ENCODE measurements at regions of chr20 and their contacts with region 1.

Region 1: DNA sequence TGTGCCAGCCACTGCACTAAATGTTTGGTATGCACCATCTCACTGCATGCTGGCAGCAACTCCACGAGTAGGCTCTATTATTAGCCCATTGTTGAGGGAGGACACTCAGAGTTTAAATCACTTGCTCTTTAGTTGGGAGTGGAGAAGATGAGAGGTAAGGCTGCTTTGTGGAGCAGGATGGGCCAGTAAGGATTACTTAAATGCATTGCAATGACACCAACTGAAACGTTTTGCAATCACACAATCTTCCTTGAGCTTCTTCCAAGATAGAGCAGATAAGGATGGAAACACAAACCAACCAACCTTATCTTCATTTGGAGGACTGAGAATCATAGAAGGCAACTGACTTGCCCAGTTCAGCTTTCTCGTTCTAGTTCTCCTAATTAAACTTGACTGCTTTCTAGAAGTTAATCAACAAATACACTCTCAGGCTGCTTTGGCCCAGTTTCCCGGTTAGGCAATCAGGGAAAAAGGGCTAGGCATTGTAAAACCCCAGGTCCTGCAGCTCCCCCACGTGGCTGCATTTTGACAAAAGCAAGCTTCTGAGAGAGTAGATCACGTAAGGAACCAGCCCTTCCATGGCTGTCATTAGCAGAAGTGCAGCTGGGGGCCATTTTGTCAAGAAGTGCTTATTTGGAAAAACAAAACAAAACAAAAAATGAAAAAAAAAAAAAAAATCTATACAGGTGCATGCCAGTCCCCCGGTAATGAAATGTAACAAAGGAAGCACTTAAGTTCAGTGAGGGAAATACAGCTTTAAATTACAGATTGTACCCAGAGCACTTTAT is 130.6 kb downstream of the BCAS1 start:
- DNase-seq: peak; percentile 90
- H3K4me3 ChIP-seq: no peak overlapping the region
- H3K27ac ChIP-seq: peak overlapping the region; percentile 82
- H3K4me1 ChIP-seq: peaks cover 28% of the 10 kb centered on the region
- H3K27me3 ChIP-seq: no peaks in the 10 kb centered on the region
- CTCF ChIP-seq: peak; percentile 84 to 86

Region 2: DNA sequence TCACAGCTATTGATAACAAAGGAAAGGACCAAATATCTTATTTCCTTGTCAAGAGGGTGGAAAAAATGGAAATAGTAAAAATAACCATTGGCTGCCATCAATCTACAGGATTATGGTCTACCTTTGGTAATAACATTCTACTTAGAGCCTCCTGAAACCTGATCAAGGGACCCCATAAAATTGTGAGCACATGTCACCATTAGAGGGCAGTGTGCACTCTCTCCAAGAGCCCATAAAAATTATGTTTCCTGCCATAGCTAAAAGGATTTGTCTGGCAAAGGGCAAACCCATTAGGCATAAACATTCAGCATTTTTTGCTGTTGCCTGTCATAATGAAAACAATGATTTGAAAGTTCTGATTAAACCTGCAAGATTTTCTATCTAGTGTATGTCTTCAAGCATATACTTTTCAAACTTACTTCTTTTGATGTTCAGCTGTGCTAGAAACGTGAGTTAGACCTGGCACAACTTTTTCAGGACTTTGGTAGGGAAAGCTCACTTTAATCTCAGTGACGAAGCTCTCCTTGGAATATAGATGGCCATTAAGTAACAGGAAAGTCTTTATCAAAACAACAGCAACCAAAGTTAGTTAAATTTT is 1627.5 kb before region 1 on chr20:
- CTCF ChIA-PET with region 1: interaction called, 3 read pairs
- dilution Hi-C with region 1: no loop called
- in situ Hi-C with region 1: no loop called
- intact Hi-C with region 1: loop called (anchors 2 kb)
- DNase-seq: peak; percentile 32
- H3K4me3 ChIP-seq: no peak overlapping the region
- H3K27ac ChIP-seq: no peak overlapping the region
- H3K4me1 ChIP-seq: no peaks in the 10 kb centered on the region
- H3K27me3 ChIP-seq: no peaks in the 10 kb centered on the region
- CTCF ChIP-seq: peak; percentile 73 to 80

Region 3: GRCh38 chr20:52361650-52362049 is 1578.1 kb before region 1 on chr20:
- CTCF ChIA-PET with region 1: no interaction called
- dilution Hi-C with region 1: no loop called
- in situ Hi-C with region 1: no loop called
- intact Hi-C with region 1: no loop called
- DNase-seq: no peak
- H3K4me3 ChIP-seq: no peak overlapping the region
- H3K27ac ChIP-seq: no peak overlapping the region
- H3K4me1 ChIP-seq: no peaks in the 10 kb centered on the region
- H3K27me3 ChIP-seq: no peaks in the 10 kb centered on the region
- CTCF ChIP-seq: no peak

Region 4: DNA sequence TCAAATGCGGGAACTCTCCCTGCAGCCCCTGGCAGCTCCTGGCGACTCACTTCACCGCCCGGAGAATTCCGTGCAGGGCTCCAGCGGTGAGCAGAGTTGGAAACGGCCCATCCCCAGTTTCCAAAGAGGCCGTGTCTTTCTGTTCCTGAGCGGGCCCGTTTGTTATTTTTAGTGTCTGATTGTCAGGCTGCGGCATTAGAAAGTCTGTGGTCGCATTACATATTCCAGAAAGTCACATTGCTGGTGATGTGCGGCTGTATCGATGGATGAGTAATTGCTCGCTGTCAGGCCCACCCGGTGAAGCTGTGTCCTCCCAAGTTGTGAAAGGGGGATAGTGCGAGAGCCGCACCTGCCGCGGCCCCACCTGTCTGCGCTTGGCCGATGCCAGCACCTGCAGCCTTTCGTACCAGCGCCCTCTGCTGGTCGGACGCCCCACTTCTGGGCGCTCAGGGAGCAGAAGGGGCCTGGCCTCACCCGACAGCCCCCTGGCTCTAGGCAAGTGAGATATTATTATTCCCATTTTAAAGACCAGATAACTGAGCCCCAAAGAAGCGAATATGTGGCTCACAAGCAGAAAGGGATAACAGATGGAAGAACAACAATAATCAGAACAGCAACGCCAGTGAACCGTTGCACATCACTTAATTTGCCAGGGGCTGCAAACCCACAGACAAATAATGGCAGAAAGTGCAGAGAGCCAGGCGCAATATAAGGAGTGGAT is 722.8 kb before region 1 on chr20:
- CTCF ChIA-PET with region 1: no interaction called
- dilution Hi-C with region 1: no loop called
- in situ Hi-C with region 1: no loop called
- intact Hi-C with region 1: loop called (anchors 1 kb)
- DNase-seq: peak; percentile 37
- H3K4me3 ChIP-seq: peak overlapping the region in 1 of 3 experiments; percentile 11
- H3K27ac ChIP-seq: no peak overlapping the region
- H3K4me1 ChIP-seq: no peaks in the 10 kb centered on the region
- H3K27me3 ChIP-seq: no peaks in the 10 kb centered on the region
- CTCF ChIP-seq: peak; percentile 57 to 93

Region 5: DNA sequence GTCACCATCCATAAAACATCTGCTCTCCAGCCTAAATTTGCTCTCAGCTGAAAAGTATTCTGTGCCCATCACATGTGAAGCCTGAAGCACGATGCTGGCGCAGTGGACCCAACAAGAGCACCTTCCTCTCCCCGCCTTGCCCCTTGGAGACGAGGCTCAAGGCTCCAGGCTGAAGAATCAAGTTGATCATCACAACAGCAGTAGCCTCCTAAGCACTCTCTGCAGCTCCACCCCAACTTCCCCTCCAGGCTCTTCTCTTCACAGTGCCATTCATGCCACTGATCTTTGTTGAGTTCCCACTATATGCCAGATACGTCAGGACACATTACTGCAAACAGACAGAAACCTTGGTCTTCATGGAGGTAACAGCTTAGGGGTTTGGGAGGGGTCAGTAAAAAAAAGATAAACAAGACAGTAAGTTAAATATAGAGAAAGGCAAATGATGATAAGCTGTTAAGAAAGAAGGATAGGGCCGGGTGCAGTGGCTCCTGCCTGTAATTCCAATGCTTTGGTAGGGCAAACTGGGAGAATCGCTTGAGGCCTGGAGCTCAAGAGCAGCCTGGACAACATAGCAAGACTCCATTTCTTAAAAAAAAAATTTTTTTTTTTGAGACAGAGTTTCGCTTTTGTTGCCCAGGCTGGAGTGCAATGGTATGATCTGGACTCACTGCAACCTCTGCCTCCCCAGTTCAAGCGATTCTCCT is 304.4 kb before region 1 on chr20:
- CTCF ChIA-PET with region 1: no interaction called
- dilution Hi-C with region 1: no loop called
- in situ Hi-C with region 1: no loop called
- intact Hi-C with region 1: no loop called
- DNase-seq: no peak
- H3K4me3 ChIP-seq: no peak overlapping the region
- H3K27ac ChIP-seq: no peak overlapping the region
- H3K4me1 ChIP-seq: no peaks in the 10 kb centered on the region
- H3K27me3 ChIP-seq: no peaks in the 10 kb centered on the region
- CTCF ChIP-seq: no peak

Region 6: GRCh38 chr20:53828682-53829254 is 111.0 kb before region 1 on chr20:
- CTCF ChIA-PET with region 1: no interaction called
- dilution Hi-C with region 1: no loop called
- in situ Hi-C with region 1: no loop called
- intact Hi-C with region 1: loop called (anchors 1 kb)
- DNase-seq: peak; percentile 84
- H3K4me3 ChIP-seq: peak overlapping the region; percentile 10 to 40 (median 35)
- H3K27ac ChIP-seq: peak overlapping the region; percentile 100
- H3K4me1 ChIP-seq: peaks cover 36% of the 10 kb centered on the region
- H3K27me3 ChIP-seq: no peaks in the 10 kb centered on the region
- CTCF ChIP-seq: peak in 1 of 2 donors; percentile 14

Region 7: GRCh38 chr20:53891306-53891944 is 48.3 kb before region 1 on chr20:
- CTCF ChIA-PET with region 1: no interaction called
- dilution Hi-C with region 1: no loop called
- in situ Hi-C with region 1: no loop called
- intact Hi-C with region 1: no loop called
- DNase-seq: no peak
- H3K4me3 ChIP-seq: no peak overlapping the region
- H3K27ac ChIP-seq: no peak overlapping the region
- H3K4me1 ChIP-seq: peaks cover 11% of the 10 kb centered on the region
- H3K27me3 ChIP-seq: no peaks in the 10 kb centered on the region
- CTCF ChIP-seq: no peak

Region 8: DNA sequence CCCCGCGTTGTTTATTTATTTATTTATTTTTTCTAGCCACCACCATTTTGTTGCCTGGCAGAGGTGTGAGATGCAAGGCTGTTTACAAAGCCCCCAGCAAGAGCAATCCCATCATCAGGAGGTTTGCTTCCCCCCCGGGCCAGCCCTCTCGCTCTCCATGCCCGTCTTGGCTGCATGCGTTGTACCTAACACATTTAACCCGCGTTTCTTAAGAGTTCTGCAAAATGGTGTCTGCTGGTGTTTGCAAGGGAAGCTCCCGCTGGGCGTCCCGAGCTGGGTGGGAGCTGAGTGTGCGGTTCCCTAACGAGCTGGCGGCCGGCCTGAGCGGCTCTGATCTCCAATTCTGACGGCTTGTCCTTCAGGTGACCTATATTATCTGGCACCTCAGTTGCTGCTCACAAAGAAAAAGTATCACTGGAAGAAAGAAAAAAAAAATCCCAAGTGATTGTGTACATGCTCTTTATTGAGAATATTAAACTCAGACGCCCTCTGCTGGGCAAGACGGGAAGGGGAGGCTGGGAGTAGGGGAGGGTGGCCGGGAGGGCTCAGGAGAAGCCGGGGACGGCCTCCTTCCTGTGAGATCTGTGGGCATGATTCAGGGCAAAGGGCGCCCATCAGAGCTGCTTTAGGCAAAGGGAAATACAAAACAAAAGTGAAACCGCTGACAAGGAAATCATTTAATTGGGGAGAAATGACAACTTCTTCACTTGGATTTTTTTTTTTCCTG is 24.2 kb before region 1 on chr20:
- CTCF ChIA-PET with region 1: no interaction called
- dilution Hi-C with region 1: no loop called
- in situ Hi-C with region 1: no loop called
- intact Hi-C with region 1: loop called (anchors 1 kb)
- DNase-seq: peak; percentile 91
- H3K4me3 ChIP-seq: peak overlapping the region; percentile 42 to 50 (median 48)
- H3K27ac ChIP-seq: peak overlapping the region; percentile 76
- H3K4me1 ChIP-seq: peaks cover 46% of the 10 kb centered on the region
- H3K27me3 ChIP-seq: no peaks in the 10 kb centered on the region
- CTCF ChIP-seq: peak; percentile 82 to 86

Region 9: GRCh38 chr20:54199721-54200176 is 260.0 kb after region 1 on chr20:
- CTCF ChIA-PET with region 1: no interaction called
- dilution Hi-C with region 1: no loop called
- in situ Hi-C with region 1: loop called in 1 of 2 experiments (anchors 10 kb)
- intact Hi-C with region 1: loop called (anchors 1 kb)
- DNase-seq: peak; percentile 70
- H3K4me3 ChIP-seq: no peak overlapping the region
- H3K27ac ChIP-seq: no peak overlapping the region
- H3K4me1 ChIP-seq: peaks cover 17% of the 10 kb centered on the region
- H3K27me3 ChIP-seq: no peaks in the 10 kb centered on the region
- CTCF ChIP-seq: peak; percentile 92 to 97

Region 10: GRCh38 chr20:54355641-54356280 is 416.0 kb after region 1 on chr20:
- CTCF ChIA-PET with region 1: no interaction called
- dilution Hi-C with region 1: no loop called
- in situ Hi-C with region 1: no loop called
- intact Hi-C with region 1: no loop called
- DNase-seq: peak; percentile 25
- H3K4me3 ChIP-seq: no peak overlapping the region
- H3K27ac ChIP-seq: no peak overlapping the region
- H3K4me1 ChIP-seq: no peaks in the 10 kb centered on the region
- H3K27me3 ChIP-seq: no peaks in the 10 kb centered on the region
- CTCF ChIP-seq: peak in 1 of 2 donors; percentile 3